Activated CD4-positive, alpha-beta T cell treated with anti-CD3 and anti-CD28 coated beads for 36 hours (primary cell): ENCODE measurements at regions of chr6 and their contacts with region 1.

Region 1: DNA sequence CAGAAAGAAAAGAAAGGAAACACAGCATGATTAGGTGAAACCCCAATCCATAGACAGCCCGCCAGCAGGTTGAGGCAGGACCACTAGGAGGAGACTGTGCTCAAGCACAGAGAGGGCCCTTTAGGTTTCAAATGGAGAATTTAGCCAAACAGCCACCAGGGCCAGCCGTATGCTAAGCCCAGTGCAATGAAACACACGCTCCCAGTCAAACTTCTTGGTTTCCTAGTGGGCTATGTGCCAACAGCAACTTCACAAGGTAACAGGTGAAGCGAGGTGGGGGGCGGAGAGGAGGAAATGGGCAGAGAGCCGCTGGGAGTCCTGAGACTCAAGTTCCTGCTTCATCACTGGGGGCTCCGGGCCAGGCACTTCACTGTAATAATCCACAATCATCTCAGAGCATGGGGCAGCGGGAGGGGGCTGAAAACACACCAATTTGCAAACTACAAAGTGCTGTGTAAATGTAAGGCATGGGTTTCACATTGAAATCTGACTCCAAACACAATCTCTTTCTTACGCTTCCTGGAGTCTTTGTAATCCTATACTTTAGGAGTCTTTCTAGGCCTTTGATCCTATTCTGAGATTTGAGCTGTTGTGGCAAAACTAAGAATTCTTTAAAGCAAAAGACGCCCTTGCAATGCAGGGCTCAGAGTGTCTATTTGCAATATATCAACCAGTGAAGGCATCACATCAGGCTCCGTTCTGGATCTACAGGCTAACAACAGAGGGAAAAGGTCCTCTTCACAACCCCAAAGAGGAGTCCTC is 117.3 kb downstream of the OPRM1 start:
- DNase-seq: peak; percentile 84
- ATAC-seq: peak; percentile 95
- H3K4me3 Mint-ChIP-seq: peak overlapping the region; percentile 64
- H3K27ac Mint-ChIP-seq: peak overlapping the region; percentile 86
- H3K4me1 Mint-ChIP-seq: peaks cover 54% of the 10 kb centered on the region
- H3K27me3 Mint-ChIP-seq: no peaks in the 10 kb centered on the region

Region 2: DNA sequence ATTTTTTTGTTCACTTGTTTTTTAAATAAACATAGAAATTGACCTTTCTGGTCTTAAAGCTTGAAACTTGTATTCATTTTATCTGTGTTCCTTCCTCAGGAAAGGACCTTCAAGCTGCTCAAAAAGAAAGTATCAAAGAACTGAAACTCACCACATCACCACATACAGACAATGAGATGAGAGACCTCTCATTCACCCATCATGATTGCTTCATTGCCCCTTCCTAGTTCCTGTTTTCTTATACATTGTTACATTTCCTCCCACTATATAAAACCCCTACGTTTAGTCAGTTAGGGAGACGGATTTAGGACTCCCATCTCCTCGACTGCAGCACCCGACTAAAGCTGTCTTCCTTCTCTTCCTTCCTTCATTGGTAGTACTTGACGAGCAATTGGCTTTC is 297.8 kb before region 1 on chr6:
- CTCF ChIA-PET with region 1: no interaction called
- POLR2A ChIA-PET with region 1: no interaction called
- intact Hi-C with region 1: no loop called
- DNase-seq: no peak
- ATAC-seq: no peak
- H3K4me3 Mint-ChIP-seq: no peak overlapping the region
- H3K27ac Mint-ChIP-seq: no peak overlapping the region
- H3K4me1 Mint-ChIP-seq: no peaks in the 10 kb centered on the region
- H3K27me3 Mint-ChIP-seq: peaks cover 3% of the 10 kb centered on the region

Region 3: GRCh38 chr6:153941768-153942167 is 214.5 kb before region 1 on chr6:
- CTCF ChIA-PET with region 1: no interaction called
- POLR2A ChIA-PET with region 1: no interaction called
- intact Hi-C with region 1: no loop called
- DNase-seq: no peak
- ATAC-seq: no peak
- H3K4me3 Mint-ChIP-seq: no peak overlapping the region
- H3K27ac Mint-ChIP-seq: no peak overlapping the region
- H3K4me1 Mint-ChIP-seq: no peaks in the 10 kb centered on the region
- H3K27me3 Mint-ChIP-seq: no peaks in the 10 kb centered on the region

Region 4: GRCh38 chr6:154223296-154223695 is 67.0 kb after region 1 on chr6:
- CTCF ChIA-PET with region 1: interaction called, 11 read pairs
- POLR2A ChIA-PET with region 1: no interaction called
- intact Hi-C with region 1: loop called in 1 of 2 experiments (anchors 2 kb)
- DNase-seq: no peak
- ATAC-seq: peak; percentile 3
- H3K4me3 Mint-ChIP-seq: no peak overlapping the region
- H3K27ac Mint-ChIP-seq: peak overlapping the region; percentile 49
- H3K4me1 Mint-ChIP-seq: peaks cover 74% of the 10 kb centered on the region
- H3K27me3 Mint-ChIP-seq: no peaks in the 10 kb centered on the region

Region 5: GRCh38 chr6:154267508-154268106 is 111.3 kb after region 1 on chr6:
- CTCF ChIA-PET with region 1: interaction called, 130 read pairs
- POLR2A ChIA-PET with region 1: interaction called, 4 read pairs
- intact Hi-C with region 1: no loop called
- DNase-seq: no peak
- ATAC-seq: peak; percentile 19
- H3K4me3 Mint-ChIP-seq: no peak overlapping the region
- H3K27ac Mint-ChIP-seq: no peak overlapping the region
- H3K4me1 Mint-ChIP-seq: peaks cover 28% of the 10 kb centered on the region
- H3K27me3 Mint-ChIP-seq: no peaks in the 10 kb centered on the region

Region 6: DNA sequence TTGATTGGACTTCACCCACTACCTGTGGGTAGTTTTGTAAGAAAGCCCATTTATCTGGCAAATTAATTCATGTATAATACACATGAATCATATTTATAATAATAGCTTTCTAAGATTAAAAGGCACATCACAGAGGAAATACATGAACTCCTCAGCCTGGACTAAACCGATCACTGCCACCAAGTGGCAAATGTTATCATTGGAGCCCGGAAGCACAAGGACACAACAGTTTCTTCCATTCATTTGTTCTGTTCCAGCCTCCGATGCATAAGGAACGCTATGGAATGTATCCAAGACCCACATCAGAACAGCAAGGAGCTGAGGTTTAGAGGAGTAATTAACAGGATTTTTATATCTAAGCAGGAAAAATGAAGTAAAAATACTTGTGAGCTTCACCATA is 214.2 kb after region 1 on chr6:
- CTCF ChIA-PET with region 1: interaction called, 9 read pairs
- POLR2A ChIA-PET with region 1: no interaction called
- intact Hi-C with region 1: loop called (anchors 1 kb)
- DNase-seq: peak; percentile 41
- ATAC-seq: peak; percentile 61
- H3K4me3 Mint-ChIP-seq: no peak overlapping the region
- H3K27ac Mint-ChIP-seq: no peak overlapping the region
- H3K4me1 Mint-ChIP-seq: peaks cover 23% of the 10 kb centered on the region
- H3K27me3 Mint-ChIP-seq: no peaks in the 10 kb centered on the region

Region 7: DNA sequence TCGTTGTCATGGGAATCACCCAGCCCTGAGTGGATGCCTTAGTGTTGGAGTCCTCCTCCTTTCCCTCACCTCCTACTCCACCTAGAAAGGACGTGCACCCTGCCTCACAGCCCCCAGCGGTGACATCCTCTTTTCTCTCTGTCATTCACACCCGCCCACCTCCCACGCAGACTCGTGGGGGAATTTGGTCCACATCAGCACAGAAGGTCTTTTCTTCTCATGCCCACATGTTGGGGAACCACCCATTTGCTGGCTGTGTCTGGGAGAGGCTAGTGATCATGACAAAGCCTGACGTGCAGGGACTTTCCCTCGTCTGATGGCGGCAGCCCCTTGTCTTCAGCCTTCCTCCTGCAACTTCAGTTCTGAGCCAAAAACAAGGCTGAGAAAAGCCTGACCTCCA is 450.1 kb after region 1 on chr6:
- CTCF ChIA-PET with region 1: interaction called, 3 read pairs
- POLR2A ChIA-PET with region 1: no interaction called
- intact Hi-C with region 1: loop called (anchors 5 to 10 kb)
- DNase-seq: peak; percentile 96
- ATAC-seq: peak; percentile 92
- H3K4me3 Mint-ChIP-seq: peak overlapping the region; percentile 13
- H3K27ac Mint-ChIP-seq: peak overlapping the region; percentile 84
- H3K4me1 Mint-ChIP-seq: peaks cover 45% of the 10 kb centered on the region
- H3K27me3 Mint-ChIP-seq: peaks cover 4% of the 10 kb centered on the region